Activated naive CD8-positive, alpha-beta T cell treated with anti-CD3 and anti-CD28 coated beads, Interleukin-2, amount 10 ng/mL, durations not matched to agents 7 days and 5 days (primary cell): ENCODE measurements at regions of chr19 and their contacts with region 1.

Region 1: DNA sequence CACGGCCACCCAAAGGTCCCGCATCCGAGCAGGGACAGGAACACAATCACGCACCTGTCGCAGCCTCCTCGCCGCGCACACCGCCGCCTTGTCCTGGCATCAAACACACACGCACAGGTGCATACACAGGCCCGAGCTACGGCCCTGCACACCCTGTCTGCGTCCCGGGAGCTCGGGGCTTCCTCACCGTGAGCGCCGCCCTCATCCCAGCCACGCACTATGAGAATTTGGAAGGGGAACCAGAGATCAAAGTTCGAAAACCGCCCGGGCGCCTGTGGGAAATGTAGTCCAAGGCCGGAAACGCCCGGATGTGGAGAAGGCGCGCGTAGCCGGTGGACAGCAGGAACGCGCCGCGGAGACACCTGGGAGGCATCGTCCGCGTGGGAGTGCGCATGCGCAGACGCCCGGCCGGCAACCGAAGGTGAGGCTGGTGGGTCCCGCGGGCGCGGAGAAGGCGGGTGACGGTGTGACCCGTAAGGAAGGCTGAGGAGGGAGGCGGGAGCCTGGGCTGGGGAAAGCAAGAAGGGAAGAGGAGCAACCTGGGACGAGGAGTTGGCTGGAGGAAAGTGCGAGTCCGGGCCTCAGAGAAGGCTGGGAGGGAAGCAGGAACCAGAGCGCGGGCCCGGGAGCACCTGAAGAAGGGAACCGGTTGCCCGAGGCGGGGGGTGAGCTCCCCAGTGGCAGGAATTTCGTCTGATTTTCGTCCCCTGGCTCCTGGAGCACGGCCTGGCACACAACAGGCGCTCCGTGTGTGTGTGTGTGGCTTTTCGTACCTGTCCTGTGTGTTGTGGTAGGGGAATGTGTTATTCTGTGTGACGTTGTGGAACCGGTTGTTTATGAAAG is at the start of gene ZNF567:
- DNase-seq: peak; percentile 98
- ATAC-seq: peak; percentile 90
- H3K4me3 Mint-ChIP-seq: peak within 1 kb of the TSS; percentile 99
- H3K27ac Mint-ChIP-seq: peak within 1 kb of the TSS; percentile 94
- H3K4me1 Mint-ChIP-seq: peaks cover 20% of the 10 kb centered on the region
- H3K27me3 Mint-ChIP-seq: no peaks in the 10 kb centered on the region
- total RNA-seq, gene ZNF567: 13.6 to 15.5 TPM

Region 2: GRCh38 chr19:36665832-36666231 is 21.6 kb before region 1 on chr19:
- POLR2A ChIA-PET with region 1: interaction called, 10 read pairs
- DNase-seq: no peak
- ATAC-seq: no peak
- H3K4me3 Mint-ChIP-seq: peak overlapping the region; percentile 98
- H3K27ac Mint-ChIP-seq: peak overlapping the region; percentile 99
- H3K4me1 Mint-ChIP-seq: peaks cover 14% of the 10 kb centered on the region
- H3K27me3 Mint-ChIP-seq: no peaks in the 10 kb centered on the region